Activated T-helper 2 cell treated with anti-CD3 and anti-CD28 coated beads, Interferon-gamma antibody, Interleukin-2, Interleukin-4, amounts not matched to agents 10 μg/mL and 5 μg/mL and 100 μg/mL, durations not matched to agents 14 hours and 24 hours and 36 hours (primary cell): ENCODE measurements at regions of chr3 and their contacts with region 1.

Region 1: DNA sequence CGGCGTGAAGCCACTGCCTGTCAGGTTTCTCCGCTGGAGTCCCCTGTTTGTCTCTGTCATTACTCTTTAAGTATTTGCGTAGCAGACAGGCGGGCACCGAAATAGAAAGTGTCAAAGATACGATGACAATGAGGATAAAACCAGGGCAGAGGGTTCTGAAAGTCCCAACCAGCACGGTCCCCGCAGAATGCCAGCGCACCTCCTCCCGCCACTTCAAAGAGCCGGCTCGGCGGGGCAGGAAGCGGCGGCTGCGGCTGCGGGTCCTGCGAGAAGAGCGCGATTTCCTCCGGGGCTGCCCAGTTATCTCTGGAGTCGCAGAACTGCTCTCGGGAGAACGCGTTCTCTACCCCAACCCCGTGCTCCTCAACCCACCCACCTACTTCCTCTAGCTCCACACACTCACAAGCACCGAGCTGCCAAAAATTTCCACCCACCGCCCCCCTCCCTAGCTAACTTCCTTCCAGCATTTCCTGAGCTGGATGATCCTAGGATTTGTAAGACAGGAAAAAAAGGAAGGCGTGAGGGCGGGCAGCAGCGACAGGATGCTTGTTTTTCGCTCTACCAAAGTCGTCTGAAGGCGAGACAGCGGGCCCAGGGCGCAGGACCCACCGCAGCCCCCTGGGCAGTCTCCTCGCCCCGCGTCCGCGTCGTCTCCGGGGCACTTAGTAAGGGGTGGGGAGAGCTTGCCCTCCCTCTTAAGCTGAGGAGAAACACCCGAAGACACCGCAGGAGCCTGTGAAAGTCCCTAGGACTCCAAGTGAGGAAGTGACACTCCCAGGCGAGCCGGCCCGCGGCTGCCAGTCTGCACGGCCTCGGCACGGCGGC is at the start of gene ARHGAP31:
- DNase-seq: peak; percentile 79
- H3K4me3 Mint-ChIP-seq: peak within 1 kb of the TSS; percentile 81
- H3K27ac Mint-ChIP-seq: peak within 1 kb of the TSS; percentile 86
- H3K4me1 Mint-ChIP-seq: peaks cover 51% of the 10 kb centered on the region
- H3K27me3 Mint-ChIP-seq: peaks cover 15% of the 10 kb centered on the region
- total RNA-seq, gene ARHGAP31: 13.2 and 14.0 TPM in 2 replicates

Region 2: GRCh38 chr3:119279101-119279554 is 15.0 kb before region 1 on chr3:
- intact Hi-C with region 1: loop called (anchors 2 kb)
- DNase-seq: no peak
- H3K4me3 Mint-ChIP-seq: no peak overlapping the region
- H3K27ac Mint-ChIP-seq: no peak overlapping the region
- H3K4me1 Mint-ChIP-seq: peaks cover 7% of the 10 kb centered on the region
- H3K27me3 Mint-ChIP-seq: peaks cover 1% of the 10 kb centered on the region

Region 3: DNA sequence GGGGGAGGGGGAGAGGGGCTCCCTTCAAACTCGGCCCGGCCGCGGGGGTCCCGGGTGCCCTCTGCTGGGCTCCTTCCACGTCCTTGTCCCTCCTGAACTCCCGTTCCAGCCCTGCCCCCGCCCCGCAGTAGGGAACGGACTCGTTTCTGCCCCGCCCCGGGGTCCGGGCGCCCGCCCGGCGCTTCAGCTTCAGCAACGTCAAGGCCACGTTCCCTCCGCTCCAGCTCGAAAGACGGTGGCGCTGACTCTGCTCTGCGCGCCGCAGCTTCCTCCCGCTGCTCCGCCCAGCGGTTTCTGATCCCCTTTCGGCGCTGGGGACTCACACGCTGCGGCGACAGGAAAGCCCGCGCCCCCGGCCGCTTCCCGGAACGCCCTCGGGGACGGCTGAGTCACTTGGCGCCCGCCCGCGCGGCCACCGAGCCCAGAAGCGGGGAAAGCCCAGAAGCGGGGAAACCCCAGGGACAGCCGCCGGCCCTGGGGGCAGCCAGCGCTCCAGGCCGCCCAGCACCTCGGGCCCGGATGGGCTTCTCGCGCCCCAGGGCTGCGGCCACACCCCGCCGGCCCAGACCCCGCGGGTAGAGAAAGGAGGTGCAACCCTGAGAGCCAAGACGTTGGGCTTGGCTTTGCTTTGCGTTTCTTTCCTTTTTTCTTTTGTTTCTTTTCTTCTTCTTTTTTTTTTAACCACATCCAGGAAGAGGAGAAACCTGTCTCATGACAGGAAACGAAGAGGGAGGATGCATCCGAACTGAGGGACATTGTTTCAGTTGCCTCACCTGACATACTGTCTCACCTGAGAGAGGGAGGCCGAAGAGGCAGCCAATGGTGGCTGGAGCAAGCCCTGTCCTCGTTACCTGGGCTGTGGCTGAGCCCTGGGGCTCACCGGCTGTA is 29.0 kb after region 1 on chr3:
- intact Hi-C with region 1: loop called (anchors 1 kb)
- DNase-seq: peak; percentile 87
- H3K4me3 Mint-ChIP-seq: peak overlapping the region; percentile 77
- H3K27ac Mint-ChIP-seq: peak overlapping the region; percentile 83
- H3K4me1 Mint-ChIP-seq: peaks cover 47% of the 10 kb centered on the region
- H3K27me3 Mint-ChIP-seq: peaks cover 2% of the 10 kb centered on the region

Region 4: DNA sequence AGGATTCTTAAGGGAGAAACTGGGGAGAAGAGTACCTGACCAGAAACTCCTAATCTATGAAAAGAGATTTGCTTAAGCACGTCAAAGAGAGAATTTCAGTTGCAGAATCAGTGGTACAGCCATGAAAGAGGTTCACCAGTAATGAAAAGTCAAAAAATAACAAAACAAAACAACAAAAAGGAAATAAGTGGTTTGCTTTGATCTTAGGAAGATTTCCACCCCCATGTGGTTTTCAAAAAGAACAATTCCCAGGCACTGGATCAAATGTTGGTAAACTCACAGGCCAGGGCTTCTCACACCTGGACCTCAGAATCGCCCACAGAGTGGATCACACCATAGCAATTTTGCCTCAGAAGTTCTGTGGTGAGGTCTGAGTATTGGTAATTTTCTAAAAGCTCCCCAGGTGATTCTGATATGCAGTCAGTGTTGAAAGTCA is 101.9 kb after region 1 on chr3:
- intact Hi-C with region 1: loop called (anchors 5 kb)
- DNase-seq: no peak
- H3K4me3 Mint-ChIP-seq: no peak overlapping the region
- H3K27ac Mint-ChIP-seq: no peak overlapping the region
- H3K4me1 Mint-ChIP-seq: peaks cover 13% of the 10 kb centered on the region
- H3K27me3 Mint-ChIP-seq: no peaks in the 10 kb centered on the region

Region 5: DNA sequence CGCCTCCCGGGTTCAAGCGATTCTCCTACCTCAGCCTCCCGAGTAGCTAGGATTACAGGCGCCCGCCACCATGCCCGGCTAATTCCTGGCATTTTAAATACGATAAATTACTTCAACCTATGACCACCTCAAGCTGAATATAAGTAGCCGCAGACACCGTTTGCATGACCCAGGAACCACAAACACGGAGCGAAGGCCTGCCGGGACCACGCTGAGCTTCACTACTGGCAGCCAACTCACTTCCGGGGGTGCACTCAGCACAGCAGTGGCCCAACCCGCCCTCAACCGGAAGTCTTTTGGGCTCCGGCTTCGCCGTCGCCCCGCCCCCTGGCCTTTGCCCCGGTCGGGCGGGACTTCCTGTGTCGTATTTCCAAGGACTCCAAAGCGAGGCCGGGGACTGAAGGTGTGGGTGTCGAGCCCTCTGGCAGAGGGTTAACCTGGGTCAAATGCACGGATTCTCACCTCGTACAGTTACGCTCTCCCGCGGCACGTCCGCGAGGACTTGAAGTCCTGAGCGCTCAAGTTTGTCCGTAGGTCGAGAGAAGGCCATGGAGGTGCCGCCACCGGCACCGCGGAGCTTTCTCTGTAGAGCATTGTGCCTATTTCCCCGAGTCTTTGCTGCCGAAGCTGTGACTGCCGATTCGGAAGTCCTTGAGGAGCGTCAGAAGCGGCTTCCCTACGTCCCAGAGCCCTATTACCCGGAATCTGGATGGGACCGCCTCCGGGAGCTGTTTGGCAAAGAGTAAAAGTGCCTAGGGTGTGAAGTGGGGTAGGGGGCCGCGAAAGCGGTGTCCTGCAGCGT is 204.3 kb after region 1 on chr3 and contains the start of gene TIMMDC1:
- intact Hi-C with region 1: loop called (anchors 5 kb)
- DNase-seq: peak; percentile 96
- H3K4me3 Mint-ChIP-seq: peak within 1 kb of the TSS; percentile 96
- H3K27ac Mint-ChIP-seq: peak within 1 kb of the TSS; percentile 95
- H3K4me1 Mint-ChIP-seq: peaks cover 32% of the 10 kb centered on the region
- H3K27me3 Mint-ChIP-seq: no peaks in the 10 kb centered on the region
- total RNA-seq, gene TIMMDC1: 93.6 and 101 TPM in 2 replicates